ENCODE measurements at regions of chr20 and their contacts with region 1.

Region 1: DNA sequence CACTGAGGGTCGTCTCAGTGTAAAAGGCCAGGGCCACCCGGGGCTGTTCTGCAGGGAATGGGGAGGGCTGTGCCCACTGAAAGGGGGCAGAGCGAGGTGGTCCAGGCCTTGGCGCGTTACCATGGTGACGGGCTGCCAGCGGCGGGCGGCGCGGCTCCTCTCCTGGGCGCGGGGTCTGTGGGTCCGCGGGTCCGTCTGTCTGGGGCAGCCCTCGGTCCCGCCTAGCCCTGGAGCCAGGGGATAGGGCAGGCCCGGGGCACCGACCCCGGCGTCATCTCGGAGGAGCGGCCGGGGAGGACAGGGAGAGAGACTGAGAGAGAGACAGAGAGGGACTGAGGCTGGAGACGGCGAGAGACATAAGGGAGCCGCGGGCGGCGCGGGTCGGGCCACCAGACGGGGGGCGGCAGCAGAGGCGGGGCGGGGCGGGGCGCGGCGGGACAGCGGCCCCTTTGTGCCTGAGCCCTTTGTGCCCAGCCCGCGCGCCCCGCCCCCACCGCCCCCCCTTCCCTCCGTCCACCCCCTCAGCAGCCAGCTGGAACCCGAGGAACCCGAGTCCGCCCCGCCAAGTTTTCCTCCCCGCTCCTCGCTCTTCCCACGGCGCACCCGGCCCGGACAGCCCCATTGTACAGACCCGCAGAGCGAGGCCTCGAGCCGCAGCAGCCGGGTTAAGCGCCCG is at the start of gene KIAA1755:
- DNase-seq: no peak
- ATAC-seq: peak; percentile 59; the same call in 1 of the 2 replicates
- H3K4me3 ChIP-seq: no peak within 1 kb of the TSS
- H3K27ac ChIP-seq: no peak within 1 kb of the TSS
- H3K4me1 ChIP-seq: no peaks in the 10 kb centered on the region
- H3K27me3 ChIP-seq: peaks cover 2% of the 10 kb centered on the region; the same call in 1 of the 2 replicates
- CTCF ChIP-seq: no peak
- total RNA-seq, gene KIAA1755: 0.08 TPM

Region 2: GRCh38 chr20:38060536-38060935 is 200.0 kb before region 1 on chr20:
- CTCF ChIA-PET with region 1: no interaction called
- POLR2A ChIA-PET with region 1: no interaction called
- in situ Hi-C with region 1: no loop called
- intact Hi-C with region 1: no loop called
- DNase-seq: no peak
- ATAC-seq: no peak
- H3K4me3 ChIP-seq: no peak overlapping the region
- H3K27ac ChIP-seq: no peak overlapping the region
- H3K4me1 ChIP-seq: peaks cover 6% of the 10 kb centered on the region; the same call in 1 of the 2 replicates
- H3K27me3 ChIP-seq: no peaks in the 10 kb centered on the region
- CTCF ChIP-seq: no peak

Region 3: DNA sequence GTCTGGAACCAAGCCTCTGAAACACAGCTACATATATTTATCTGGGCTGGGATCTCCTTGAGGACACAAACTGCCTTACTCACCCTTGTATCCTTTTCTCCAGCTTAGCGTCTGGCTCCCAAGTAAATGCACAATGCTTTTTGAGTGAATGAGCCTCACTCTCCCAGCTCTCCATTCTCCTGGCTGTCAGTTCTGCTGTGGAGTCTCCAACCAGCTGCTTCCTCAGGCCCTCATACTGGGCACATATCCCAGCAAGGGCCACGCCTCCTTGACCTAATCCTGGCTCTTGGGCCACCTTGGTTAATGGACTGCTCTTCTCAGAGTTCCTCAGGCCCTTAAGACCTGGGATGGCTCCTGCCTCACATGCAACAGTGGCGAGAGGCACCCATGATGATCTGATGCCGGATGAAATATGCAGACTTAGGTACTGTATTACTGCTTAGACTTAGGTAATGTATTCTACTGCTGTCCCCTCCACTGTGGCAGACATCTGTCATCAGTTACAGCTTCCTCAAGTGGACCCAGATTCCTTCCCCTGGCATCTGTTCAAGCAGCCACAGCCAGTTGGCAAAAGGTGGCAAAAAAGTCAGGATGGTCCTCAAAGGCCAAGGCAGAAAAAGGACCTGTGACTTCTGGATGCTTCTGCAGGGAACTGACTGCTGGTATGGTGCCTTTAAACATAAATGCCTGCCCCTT is 158.1 kb after region 1 on chr20:
- CTCF ChIA-PET with region 1: no interaction called
- POLR2A ChIA-PET with region 1: interaction called, 11 read pairs
- in situ Hi-C with region 1: no loop called
- intact Hi-C with region 1: no loop called
- DNase-seq: no peak
- ATAC-seq: peak; percentile 59
- H3K4me3 ChIP-seq: no peak overlapping the region
- H3K27ac ChIP-seq: no peak overlapping the region
- H3K4me1 ChIP-seq: no peaks in the 10 kb centered on the region
- H3K27me3 ChIP-seq: no peaks in the 10 kb centered on the region
- CTCF ChIP-seq: no peak